Ascending aorta (tissue), 2 donors: ENCODE measurements at regions of chr12 and their contacts with region 1.

Region 1: DNA sequence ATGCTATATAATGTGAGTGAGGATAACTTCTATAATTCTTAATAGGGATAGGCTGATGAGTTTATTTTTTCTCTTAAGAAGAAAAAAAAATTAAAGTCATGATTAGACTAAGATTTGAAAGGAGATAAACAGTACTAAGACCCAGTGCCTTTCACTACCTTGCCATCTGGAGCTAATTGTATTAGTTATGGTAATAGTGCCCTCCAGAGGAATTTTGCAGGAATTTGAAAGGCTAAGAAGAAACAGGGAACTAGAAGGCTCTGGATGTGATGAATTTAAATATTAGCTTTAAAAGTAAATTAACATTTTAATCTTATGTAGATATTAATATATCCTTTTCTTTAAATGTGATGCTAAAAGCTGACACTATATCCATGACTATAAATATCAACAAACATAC is 36.6 kb upstream of the PIK3C2G start:
- DNase-seq: no peak
- H3K4me3 ChIP-seq: no peak overlapping the region
- H3K27ac ChIP-seq: no peak overlapping the region
- H3K4me1 ChIP-seq: no peaks in the 10 kb centered on the region
- H3K27me3 ChIP-seq: no peaks in the 10 kb centered on the region
- CTCF ChIP-seq: peak in 2 of 3 experiments; percentile 18 to 22

Region 2: DNA sequence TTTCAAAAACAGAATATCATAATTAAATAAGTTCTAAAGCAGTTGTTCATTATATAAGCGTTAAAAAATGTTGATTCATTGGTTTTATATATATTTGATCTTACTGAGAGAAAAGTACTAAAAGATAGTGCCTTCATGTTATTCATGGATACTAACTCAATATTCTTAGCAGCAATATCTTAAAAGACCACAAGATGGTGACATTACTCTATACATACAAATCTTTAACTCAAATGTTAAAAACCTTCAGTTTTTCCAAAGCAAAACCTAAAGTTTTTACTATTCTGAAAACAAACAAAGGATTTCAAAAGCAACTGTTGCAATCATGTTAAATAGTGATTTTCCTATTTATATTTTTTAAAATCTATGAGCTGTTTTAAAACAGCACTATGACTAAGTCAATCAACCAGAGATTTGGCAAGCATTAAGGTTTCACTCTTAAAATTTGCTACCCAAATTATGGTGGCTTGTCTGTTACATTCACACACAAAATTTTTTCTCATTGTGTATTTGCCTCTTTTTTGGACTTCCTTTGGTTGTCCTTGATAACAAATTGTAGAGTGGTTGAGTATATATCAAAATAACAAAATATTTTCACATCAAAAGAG is 84.7 kb before region 1 on chr12:
- intact Hi-C with region 1: loop called (anchors 5 kb)
- DNase-seq: no peak
- H3K4me3 ChIP-seq: no peak overlapping the region
- H3K27ac ChIP-seq: no peak overlapping the region
- H3K4me1 ChIP-seq: peaks cover 0 to 14% of the 10 kb centered on the region in 2 donors
- H3K27me3 ChIP-seq: no peaks in the 10 kb centered on the region
- CTCF ChIP-seq: peak; percentile 24 to 44 (median 35)